Right cardiac atrium (tissue), 5 donors: ENCODE measurements at regions of chr1 and their contacts with region 1.

Region 1: GRCh38 chr1:243325305-243325890 is 69.6 kb downstream of the SDCCAG8 start:
- DNase-seq: no peak
- ATAC-seq: no peak
- H3K4me3 ChIP-seq: no peak overlapping the region
- H3K27ac ChIP-seq: no peak overlapping the region
- H3K4me1 ChIP-seq: no peaks in the 10 kb centered on the region
- H3K27me3 ChIP-seq: no peaks in the 10 kb centered on the region

Region 2: GRCh38 chr1:242454262-242455045 is 870.9 kb before region 1 on chr1:
- intact Hi-C with region 1: loop called in 1 of 4 experiments (anchors 10 kb)
- DNase-seq: no peak
- ATAC-seq: no peak
- H3K4me3 ChIP-seq: no peak overlapping the region
- H3K27ac ChIP-seq: no peak overlapping the region
- H3K4me1 ChIP-seq: no peaks in the 10 kb centered on the region
- H3K27me3 ChIP-seq: peaks cover 4% of the 10 kb centered on the region

Region 3: DNA sequence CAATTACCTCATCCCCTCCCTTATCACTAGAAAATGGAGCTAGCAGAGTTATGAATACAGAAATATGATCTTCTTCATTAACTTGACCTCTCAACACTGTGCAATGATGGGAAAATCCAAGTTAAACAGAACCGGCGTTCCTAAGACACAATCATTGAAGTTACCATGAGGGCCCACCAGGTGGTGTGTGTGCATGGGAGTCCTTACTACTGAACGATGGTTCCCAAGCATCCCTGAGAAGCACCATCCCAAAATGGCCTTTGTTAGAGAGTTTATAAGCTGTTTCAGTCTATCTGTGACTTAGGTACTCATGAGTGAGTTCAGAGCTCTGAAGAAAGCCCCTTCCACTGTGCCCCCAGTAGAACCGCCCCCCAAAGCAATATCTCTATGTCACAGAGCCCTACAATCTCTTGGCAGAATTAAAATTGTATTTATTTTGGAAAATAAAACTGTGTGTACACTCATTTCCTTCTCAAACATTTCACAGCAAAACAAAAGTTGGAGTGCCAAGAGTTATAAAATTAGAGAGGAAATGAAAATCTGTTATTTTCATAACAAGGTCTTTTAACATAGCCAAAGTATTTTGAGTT is 857.7 kb before region 1 on chr1:
- intact Hi-C with region 1: loop called in 2 of 4 experiments (anchors 10 kb)
- DNase-seq: peak in 2 of 3 donors; percentile 38 to 70
- ATAC-seq: peak; percentile 76 to 84
- H3K4me3 ChIP-seq: no peak overlapping the region
- H3K27ac ChIP-seq: no peak overlapping the region
- H3K4me1 ChIP-seq: no peaks in the 10 kb centered on the region
- H3K27me3 ChIP-seq: no peaks in the 10 kb centered on the region